Caco-2 (cell line): ENCODE measurements at regions of chr14 and their contacts with region 1.

Region 1: DNA sequence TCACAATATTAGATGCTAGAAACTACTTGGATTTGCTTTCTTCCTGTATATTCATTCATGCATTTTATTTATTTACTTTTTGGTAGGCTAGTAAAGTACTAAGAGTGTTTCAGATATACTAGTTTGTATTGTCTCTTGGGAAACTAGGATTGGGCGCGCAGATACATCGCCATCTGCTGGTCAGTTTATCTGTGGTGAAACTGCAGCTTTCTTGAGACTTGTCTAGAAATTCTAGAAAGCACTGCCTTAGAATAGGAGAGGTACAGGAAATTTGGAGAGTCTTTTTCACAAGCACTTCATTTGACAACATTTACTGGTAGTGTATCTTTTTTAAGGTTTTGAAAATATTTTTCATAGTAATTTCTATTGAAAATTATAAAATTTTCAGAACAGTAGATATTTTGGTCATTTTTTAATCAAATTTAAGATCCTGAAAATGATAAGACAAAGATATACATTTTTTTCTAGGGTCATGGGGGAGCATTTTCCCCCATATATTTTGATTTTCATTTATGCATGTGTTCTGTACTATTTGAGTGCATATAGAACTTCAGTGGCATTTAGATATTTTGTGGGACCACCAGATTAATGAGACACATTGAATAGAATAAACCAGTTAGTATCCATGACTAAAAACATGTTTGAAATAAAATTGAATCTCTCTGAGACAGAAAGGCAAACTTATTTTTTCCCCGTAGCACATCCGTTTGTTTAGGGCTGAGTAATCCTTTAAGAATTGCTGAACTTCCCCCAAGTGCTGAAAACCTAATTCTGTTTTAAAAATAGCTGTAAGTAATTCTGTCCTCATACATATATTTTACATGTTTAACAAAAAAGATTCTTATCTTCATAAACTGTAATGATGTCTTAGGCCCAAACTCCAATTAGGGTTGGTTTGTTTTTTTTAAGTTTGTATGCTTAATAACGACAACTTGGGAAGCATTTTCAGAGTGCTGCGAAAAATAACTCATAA is 44.5 kb downstream of the SLC38A6 start:
- DNase-seq: peak; percentile 50 to 64
- H3K4me3 ChIP-seq: no peak overlapping the region
- H3K4me3 Mint-ChIP-seq: no peak overlapping the region
- H3K27ac Mint-ChIP-seq: no peak overlapping the region
- H3K4me1 ChIP-seq: no peaks in the 10 kb centered on the region
- H3K4me1 Mint-ChIP-seq: no peaks in the 10 kb centered on the region
- H3K27me3 ChIP-seq: no peaks in the 10 kb centered on the region
- H3K27me3 Mint-ChIP-seq: no peaks in the 10 kb centered on the region
- CTCF ChIP-seq: peak; percentile 70 to 84

Region 2: GRCh38 chr14:60622917-60623257 is 402.6 kb before region 1 on chr14:
- CTCF ChIA-PET with region 1: interaction called, 12 read pairs
- POLR2A ChIA-PET with region 1: no interaction called
- intact Hi-C with region 1: loop called (anchors 1 kb)
- DNase-seq: no peak
- H3K4me3 ChIP-seq: no peak overlapping the region
- H3K4me3 Mint-ChIP-seq: no peak overlapping the region
- H3K27ac Mint-ChIP-seq: no peak overlapping the region
- H3K4me1 ChIP-seq: peaks cover 6% of the 10 kb centered on the region
- H3K4me1 Mint-ChIP-seq: peaks cover 1% of the 10 kb centered on the region
- H3K27me3 ChIP-seq: no peaks in the 10 kb centered on the region
- H3K27me3 Mint-ChIP-seq: no peaks in the 10 kb centered on the region
- CTCF ChIP-seq: no peak

Region 3: GRCh38 chr14:60980811-60981632 is 44.5 kb before region 1 on chr14 and contains the starts of genes SLC38A6 and TRMT5:
- CTCF ChIA-PET with region 1: no interaction called
- POLR2A ChIA-PET with region 1: no interaction called
- intact Hi-C with region 1: loop called (anchors 1 kb)
- DNase-seq: peak; percentile 94 to 95
- H3K4me3 ChIP-seq: peak within 1 kb of the TSS; percentile 81
- H3K4me3 Mint-ChIP-seq: no peak within 1 kb of the TSS
- H3K27ac Mint-ChIP-seq: no peak within 1 kb of the TSS
- H3K4me1 ChIP-seq: peaks cover 6% of the 10 kb centered on the region; the same call in 1 of the 2 replicates
- H3K4me1 Mint-ChIP-seq: no peaks in the 10 kb centered on the region
- H3K27me3 ChIP-seq: no peaks in the 10 kb centered on the region
- H3K27me3 Mint-ChIP-seq: no peaks in the 10 kb centered on the region
- CTCF ChIP-seq: no peak
- total RNA-seq, gene SLC38A6: 10.2 and 11.5 TPM in 2 replicates
- total RNA-seq, gene TRMT5: 16.3 and 16.5 TPM in 2 replicates

Region 4: DNA sequence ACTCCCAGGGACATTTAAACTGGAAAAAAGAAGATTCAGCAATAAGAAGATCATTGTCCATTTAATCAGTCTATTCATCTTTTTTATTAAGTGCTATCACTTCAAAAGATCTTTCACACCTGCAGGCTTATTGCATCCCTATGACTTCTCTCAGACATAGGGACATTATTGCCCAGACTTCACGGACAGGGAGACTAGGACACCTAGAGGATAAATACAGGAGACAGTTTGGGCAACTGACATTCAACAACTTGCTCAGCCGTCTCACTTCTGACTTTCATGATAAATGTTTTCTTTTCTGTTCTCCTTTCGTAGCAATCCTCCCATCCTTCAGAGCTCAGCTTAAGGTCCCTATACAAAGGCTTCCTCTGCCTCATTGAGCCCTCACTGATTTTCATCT is 171.3 kb after region 1 on chr14:
- CTCF ChIA-PET with region 1: no interaction called
- POLR2A ChIA-PET with region 1: no interaction called
- intact Hi-C with region 1: loop called (anchors 5 kb)
- DNase-seq: no peak
- H3K4me3 ChIP-seq: no peak overlapping the region
- H3K4me3 Mint-ChIP-seq: no peak overlapping the region
- H3K27ac Mint-ChIP-seq: no peak overlapping the region
- H3K4me1 ChIP-seq: no peaks in the 10 kb centered on the region
- H3K4me1 Mint-ChIP-seq: no peaks in the 10 kb centered on the region
- H3K27me3 ChIP-seq: no peaks in the 10 kb centered on the region
- H3K27me3 Mint-ChIP-seq: peaks cover 12% of the 10 kb centered on the region
- CTCF ChIP-seq: peak in 1 of 2 experiments; percentile 19

Region 5: GRCh38 chr14:61252369-61253063 is 227.0 kb after region 1 on chr14:
- CTCF ChIA-PET with region 1: no interaction called
- POLR2A ChIA-PET with region 1: no interaction called
- intact Hi-C with region 1: loop called (anchors 1 kb)
- DNase-seq: peak; percentile 81
- H3K4me3 ChIP-seq: no peak overlapping the region
- H3K4me3 Mint-ChIP-seq: no peak overlapping the region
- H3K27ac Mint-ChIP-seq: no peak overlapping the region
- H3K4me1 ChIP-seq: 0 out of 2 replicates have a peak, but pooled peaks cover 4% of the 10 kb centered on the region
- H3K4me1 Mint-ChIP-seq: no peaks in the 10 kb centered on the region
- H3K27me3 ChIP-seq: no peaks in the 10 kb centered on the region
- H3K27me3 Mint-ChIP-seq: peaks cover 9% of the 10 kb centered on the region
- CTCF ChIP-seq: peak; percentile 72 to 91